GM12878 (cell line): ENCODE measurements at regions of chr12 and their contacts with region 1.

Region 1: DNA sequence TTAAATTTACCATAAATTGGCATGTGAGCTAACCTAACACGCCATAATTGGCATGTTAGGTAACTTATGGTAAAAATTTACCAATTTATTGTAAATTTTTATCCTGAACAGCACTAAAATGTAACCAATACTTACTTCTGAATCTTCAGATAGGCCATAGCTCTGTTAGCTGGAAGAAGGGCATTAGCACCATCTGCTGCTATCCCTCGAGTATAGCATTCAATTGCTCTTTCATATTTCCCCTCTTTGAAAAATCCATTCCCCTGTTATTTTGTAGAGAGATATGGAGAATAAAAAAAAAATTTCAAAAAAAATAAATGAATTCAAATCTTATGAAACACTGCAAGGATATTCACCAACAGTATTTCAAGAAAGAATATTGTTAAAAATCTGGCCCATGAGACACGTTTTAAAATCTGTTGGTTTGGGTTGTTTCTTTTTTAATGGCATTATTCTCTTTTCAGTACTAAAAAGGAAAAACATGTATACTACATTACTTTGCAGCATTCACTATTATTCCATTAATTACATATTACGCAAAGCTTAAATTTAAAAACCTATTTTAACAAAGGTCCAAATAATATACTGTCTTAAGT is 19.1 kb downstream of the RPAP3 start:
- DNase-seq: no peak
- ATAC-seq: peak; percentile 66
- H3K4me3 ChIP-seq: no peak overlapping the region
- H3K27ac ChIP-seq: no peak overlapping the region
- H3K4me1 ChIP-seq: no peaks in the 10 kb centered on the region
- H3K27me3 ChIP-seq: no peaks in the 10 kb centered on the region
- CTCF ChIP-seq: peak; percentile 51 to 67 (median 56); a peak in 5 of 6 replicates
- EP300 ChIP-seq: no peak
- POLR2A ChIP-seq: no peak
- RAD21 ChIP-seq: peak; percentile 75

Region 2: GRCh38 chr12:47657565-47657964 is 29.2 kb before region 1 on chr12:
- CTCF ChIA-PET with region 1: interaction called, 65 read pairs
- POLR2A ChIA-PET with region 1: no interaction called
- RAD21 ChIA-PET with region 1: no interaction called
- SMC1A ChIA-PET with region 1: interaction called, 3 read pairs
- in situ Hi-C with region 1: no loop called
- intact Hi-C with region 1: no loop called
- DNase-seq: no peak
- ATAC-seq: no peak
- H3K4me3 ChIP-seq: no peak overlapping the region
- H3K27ac ChIP-seq: no peak overlapping the region
- H3K4me1 ChIP-seq: peaks cover under 1% of the 10 kb centered on the region; the same call in 1 of the 2 replicates
- H3K27me3 ChIP-seq: no peaks in the 10 kb centered on the region
- CTCF ChIP-seq: no peak
- EP300 ChIP-seq: no peak
- POLR2A ChIP-seq: no peak
- RAD21 ChIP-seq: no peak

Region 3: GRCh38 chr12:47698055-47698454 is 11.3 kb after region 1 on chr12:
- CTCF ChIA-PET with region 1: interaction called, 6 read pairs
- POLR2A ChIA-PET with region 1: no interaction called
- RAD21 ChIA-PET with region 1: interaction called, 8 read pairs
- SMC1A ChIA-PET with region 1: interaction called, 10 read pairs
- in situ Hi-C with region 1: no loop called
- intact Hi-C with region 1: no loop called
- DNase-seq: no peak
- ATAC-seq: peak; percentile 81
- H3K4me3 ChIP-seq: no peak overlapping the region
- H3K27ac ChIP-seq: no peak overlapping the region
- H3K4me1 ChIP-seq: no peaks in the 10 kb centered on the region; the same call in 1 of the 2 replicates
- H3K27me3 ChIP-seq: no peaks in the 10 kb centered on the region
- CTCF ChIP-seq: no peak
- EP300 ChIP-seq: no peak
- POLR2A ChIP-seq: no peak
- RAD21 ChIP-seq: no peak